Motor neuron (in vitro differentiated cells): ENCODE measurements at regions of chr7 and their contacts with region 1.

Region 1: GRCh38 chr7:140696680-140697446 is at the start of gene NDUFB2:
- ATAC-seq: peak; percentile 84 to 91 (median 90)
- H3K4me3 ChIP-seq: peak within 1 kb of the TSS; percentile 60 to 68 (median 61)
- H3K27ac ChIP-seq: peak within 1 kb of the TSS; percentile 91 to 95
- H3K4me1 ChIP-seq: peaks cover 19 to 20% of the 10 kb centered on the region in 2 donors
- total RNA-seq, gene NDUFB2: 168 to 313 (median 248) TPM

Region 2: DNA sequence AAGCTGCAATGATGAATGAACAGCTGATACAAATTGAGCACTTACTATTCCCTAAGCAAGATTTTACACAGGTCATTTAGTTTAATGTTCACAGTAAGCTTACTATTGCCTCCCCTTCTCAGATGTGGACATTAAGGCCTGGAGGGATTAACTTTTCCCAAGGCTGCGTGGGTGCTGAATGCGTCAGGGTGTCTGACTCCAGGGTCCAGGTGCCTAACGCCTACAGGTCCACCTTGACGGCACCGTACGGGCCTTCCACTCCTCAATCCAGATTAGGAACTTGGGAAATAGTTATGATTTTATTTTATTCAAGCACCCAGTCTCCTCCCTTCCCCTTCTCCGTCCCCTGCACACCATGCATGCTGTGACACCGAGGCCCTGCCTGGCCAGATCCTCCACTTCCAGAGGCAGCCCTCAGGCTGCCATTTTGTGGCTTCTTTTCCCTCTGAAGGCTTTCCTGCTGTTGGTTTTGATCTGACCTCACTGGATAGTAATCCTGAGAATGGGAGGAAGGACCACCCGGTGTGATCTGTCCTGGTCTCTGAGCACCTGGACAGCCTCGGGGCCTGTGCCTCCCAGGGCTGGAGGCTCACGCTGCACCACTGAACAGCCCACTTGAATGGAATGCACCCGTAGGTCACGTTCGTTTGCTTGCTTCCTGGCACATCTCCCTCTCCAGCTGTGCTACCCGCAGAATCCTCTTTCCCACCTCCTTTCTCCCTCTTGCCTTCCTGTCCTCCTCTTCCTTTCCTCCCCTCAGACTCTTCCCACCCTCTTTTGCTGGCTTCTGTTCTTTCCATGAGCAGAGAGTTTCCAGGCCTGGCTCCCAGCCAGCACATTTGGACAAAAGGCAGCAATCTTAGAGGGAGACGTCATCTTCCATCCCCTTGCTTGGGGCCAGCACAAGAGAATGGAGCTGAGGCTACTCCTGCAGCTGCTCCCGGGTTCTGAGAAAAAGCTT is 70.7 kb before region 1 on chr7:
- in situ Hi-C with region 1: no loop called
- ATAC-seq: peak; percentile 55 to 94 (median 68)
- H3K4me3 ChIP-seq: no peak overlapping the region
- H3K27ac ChIP-seq: peak overlapping the region; percentile 45 to 60
- H3K4me1 ChIP-seq: peaks cover 17 to 22% of the 10 kb centered on the region in 2 donors

Region 3: DNA sequence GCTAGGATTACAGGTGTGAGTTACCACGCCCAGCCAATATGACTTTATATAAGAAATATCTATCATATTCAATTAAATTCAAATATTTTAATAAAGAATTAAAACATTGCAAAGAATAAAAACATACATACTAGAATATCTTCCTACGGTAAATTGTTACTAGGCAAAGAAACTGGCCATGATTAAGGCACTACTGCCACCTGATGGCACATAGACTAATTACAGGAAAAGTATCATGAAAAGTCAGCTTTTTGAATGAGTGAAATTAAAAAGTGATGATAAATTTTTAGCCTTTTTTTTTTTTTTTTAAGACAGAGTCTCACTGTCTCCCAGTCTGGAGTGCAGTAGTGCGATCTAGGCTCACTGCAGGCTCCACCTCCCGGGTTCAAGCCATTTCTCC is 286.9 kb after region 1 on chr7:
- in situ Hi-C with region 1: loop called in 1 of 9 experiments (anchors 25 kb)
- ATAC-seq: no peak
- H3K4me3 ChIP-seq: no peak overlapping the region
- H3K27ac ChIP-seq: no peak overlapping the region
- H3K4me1 ChIP-seq: no peaks in the 10 kb centered on the region

Region 4: DNA sequence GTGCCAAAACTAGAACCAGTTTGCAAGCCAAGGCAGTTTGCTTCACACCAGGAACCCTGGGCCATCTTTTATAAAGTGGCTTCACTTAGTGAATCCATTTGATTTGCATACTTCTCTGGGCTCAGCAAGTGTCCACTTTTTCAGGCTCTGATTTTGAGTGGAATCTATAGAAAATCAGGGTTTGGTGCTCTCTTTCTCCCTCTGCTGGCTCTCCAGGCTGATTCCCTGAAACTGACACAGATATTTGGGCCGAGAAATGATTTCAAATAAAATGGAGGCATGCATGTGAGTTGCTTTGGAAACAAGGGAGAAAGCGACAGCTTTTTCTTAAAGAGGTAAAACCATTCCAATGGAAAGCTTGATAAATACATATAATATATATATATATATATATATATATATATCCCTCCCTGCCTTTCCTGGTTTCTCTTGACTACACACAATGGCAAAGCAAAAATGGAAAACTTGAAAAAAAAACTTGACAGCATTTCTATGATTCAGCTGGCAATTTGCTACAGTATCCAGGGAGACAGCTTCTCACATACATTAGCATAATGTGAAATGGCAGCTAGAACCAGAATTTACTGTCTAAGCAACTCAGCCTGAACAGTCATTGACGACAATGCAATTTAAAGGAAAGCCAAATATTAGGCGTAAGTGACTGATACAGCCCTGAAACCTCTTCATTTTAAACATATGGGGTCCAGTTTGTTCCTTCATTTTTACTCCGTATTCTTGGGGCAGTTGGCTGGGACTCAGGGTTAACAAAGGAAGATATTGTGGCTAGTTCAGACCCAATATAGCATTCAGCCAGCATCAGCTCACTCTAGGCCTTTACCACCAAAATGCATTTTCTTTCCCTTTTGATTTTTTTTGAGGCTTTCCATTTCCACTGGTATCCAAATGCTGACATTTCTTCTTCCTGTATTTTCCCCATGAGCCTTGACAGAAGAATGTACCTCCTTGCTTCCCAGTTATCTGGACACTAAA is 565.5 kb after region 1 on chr7:
- in situ Hi-C with region 1: no loop called
- ATAC-seq: peak in 7 of 8 experiments; percentile 39 to 98 (median 91)
- H3K4me3 ChIP-seq: no peak overlapping the region
- H3K27ac ChIP-seq: peak overlapping the region; percentile 40 to 43
- H3K4me1 ChIP-seq: peaks cover 19 to 22% of the 10 kb centered on the region in 2 donors